Natural killer cell (primary cell): ENCODE measurements at regions of chr1 and their contacts with region 1.

Region 1: DNA sequence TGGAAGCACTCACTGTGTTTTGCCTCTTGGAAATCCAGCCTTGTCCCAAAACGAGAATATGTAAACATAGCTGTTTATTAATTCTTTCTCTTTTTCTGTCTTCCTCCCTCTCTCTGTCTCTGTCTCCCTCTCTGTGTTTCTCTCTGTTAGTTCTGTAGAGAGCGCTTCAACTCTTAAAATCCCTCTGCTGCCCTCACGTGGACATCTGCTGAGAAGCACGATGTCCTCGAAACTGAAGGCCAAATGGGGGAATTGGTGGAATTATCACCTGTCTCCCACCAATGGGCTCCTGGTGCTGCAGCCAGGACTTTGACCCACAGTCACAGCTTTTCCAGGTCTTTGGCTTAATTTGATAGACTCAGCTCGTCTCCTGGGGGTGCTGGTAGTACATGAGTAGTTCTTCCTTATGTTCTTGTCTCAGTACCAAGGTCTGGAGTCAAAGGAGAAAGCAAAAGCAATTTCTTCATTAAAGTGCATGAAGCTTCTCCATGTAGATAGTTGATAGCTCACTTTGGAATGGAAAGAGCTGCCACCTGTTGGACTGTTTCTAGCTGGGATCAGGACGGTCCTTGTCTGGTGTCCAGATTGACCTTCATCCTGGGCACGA is 5.5 kb upstream of the GBP6 start:
- DNase-seq: peak; percentile 76 to 90
- ATAC-seq: peak; percentile 91 to 99 (median 99)
- H3K4me3 ChIP-seq: no peak overlapping the region
- H3K4me3 Mint-ChIP-seq: peak overlapping the region; percentile 0
- H3K27ac ChIP-seq: no peak overlapping the region
- H3K27ac Mint-ChIP-seq: peak overlapping the region; percentile 2 to 60
- H3K4me1 ChIP-seq: peaks cover 5% of the 10 kb centered on the region
- H3K4me1 Mint-ChIP-seq: peaks cover 13 to 17% of the 10 kb centered on the region in 2 donors
- H3K27me3 ChIP-seq: no peaks in the 10 kb centered on the region
- H3K27me3 Mint-ChIP-seq: peaks cover 0 to 10% of the 10 kb centered on the region in 2 donors
- CTCF ChIP-seq: peak; percentile 87

Region 2: GRCh38 chr1:88998716-88999115 is 359.7 kb before region 1 on chr1:
- intact Hi-C with region 1: loop called (anchors 1 kb)
- DNase-seq: peak in 1 of 2 donors; percentile 87
- ATAC-seq: peak; percentile 81 to 90 (median 89)
- H3K4me3 ChIP-seq: no peak overlapping the region
- H3K4me3 Mint-ChIP-seq: no peak overlapping the region
- H3K27ac ChIP-seq: no peak overlapping the region
- H3K27ac Mint-ChIP-seq: no peak overlapping the region
- H3K4me1 ChIP-seq: peaks cover 1% of the 10 kb centered on the region
- H3K4me1 Mint-ChIP-seq: peaks cover 18 to 19% of the 10 kb centered on the region in 2 donors
- H3K27me3 ChIP-seq: no peaks in the 10 kb centered on the region
- H3K27me3 Mint-ChIP-seq: no peaks in the 10 kb centered on the region
- CTCF ChIP-seq: peak; percentile 69

Region 3: DNA sequence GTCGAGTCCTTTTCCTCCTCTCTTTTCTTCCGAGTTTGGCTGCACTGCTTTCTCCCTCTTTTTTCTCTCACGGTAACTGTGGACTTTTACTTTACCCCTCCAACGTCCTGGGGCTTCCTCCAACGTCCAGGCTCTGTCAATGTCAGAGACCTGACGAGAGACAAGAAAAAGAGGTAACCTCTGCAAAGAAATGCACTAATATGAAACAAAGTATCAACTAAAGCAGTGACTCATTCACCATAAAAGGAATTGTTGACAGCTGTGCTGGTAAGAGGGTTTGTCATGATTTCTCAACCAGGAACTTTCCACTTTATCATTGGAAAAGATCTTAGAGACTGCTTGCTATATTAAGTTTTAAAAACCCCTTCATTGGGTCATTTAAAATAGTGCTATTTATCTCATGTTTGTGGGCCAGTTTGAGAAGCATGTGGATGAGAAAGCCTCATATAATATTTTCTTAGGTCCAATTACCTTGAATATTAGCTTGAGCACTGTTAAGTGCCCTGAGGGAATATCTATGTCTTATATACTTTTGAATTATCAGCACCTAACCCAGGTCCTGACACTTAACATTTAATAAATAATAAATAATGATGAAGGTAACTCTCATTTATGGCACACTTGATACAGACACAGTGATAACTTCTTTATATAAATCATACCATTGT is 232.3 kb before region 1 on chr1 and contains the start of gene GBP2:
- intact Hi-C with region 1: loop called (anchors 1 kb)
- DNase-seq: peak; percentile 34 to 69
- ATAC-seq: peak; percentile 77 to 85 (median 84)
- H3K4me3 ChIP-seq: peak within 1 kb of the TSS; percentile 64
- H3K4me3 Mint-ChIP-seq: peak within 1 kb of the TSS; percentile 100
- H3K27ac ChIP-seq: peak within 1 kb of the TSS; percentile 79
- H3K27ac Mint-ChIP-seq: peak within 1 kb of the TSS; percentile 94 to 97
- H3K4me1 ChIP-seq: peaks cover 32% of the 10 kb centered on the region
- H3K4me1 Mint-ChIP-seq: peaks cover 71 to 77% of the 10 kb centered on the region in 2 donors
- H3K27me3 ChIP-seq: no peaks in the 10 kb centered on the region
- H3K27me3 Mint-ChIP-seq: no peaks in the 10 kb centered on the region
- CTCF ChIP-seq: no peak
- total RNA-seq, gene GBP2: 117 to 153 (median 144) TPM

Region 4: GRCh38 chr1:89271341-89272015 is 86.9 kb before region 1 on chr1:
- intact Hi-C with region 1: loop called (anchors 1 kb)
- DNase-seq: no peak
- ATAC-seq: peak in 2 of 3 donors; percentile 36 to 41
- H3K4me3 ChIP-seq: peak overlapping the region; percentile 56
- H3K4me3 Mint-ChIP-seq: peak overlapping the region; percentile 96
- H3K27ac ChIP-seq: peak overlapping the region; percentile 59
- H3K27ac Mint-ChIP-seq: peak overlapping the region; percentile 98
- H3K4me1 ChIP-seq: peaks cover 24% of the 10 kb centered on the region
- H3K4me1 Mint-ChIP-seq: peaks cover 76 to 79% of the 10 kb centered on the region in 2 donors
- H3K27me3 ChIP-seq: no peaks in the 10 kb centered on the region
- H3K27me3 Mint-ChIP-seq: no peaks in the 10 kb centered on the region
- CTCF ChIP-seq: no peak

Region 5: GRCh38 chr1:89310505-89310904 is 47.9 kb before region 1 on chr1:
- intact Hi-C with region 1: loop called (anchors 5 kb)
- DNase-seq: peak in 1 of 2 donors; percentile 47
- ATAC-seq: peak; percentile 80 to 85 (median 84)
- H3K4me3 ChIP-seq: no peak overlapping the region
- H3K4me3 Mint-ChIP-seq: peak overlapping the region; percentile 73
- H3K27ac ChIP-seq: peak overlapping the region; percentile 79
- H3K27ac Mint-ChIP-seq: peak overlapping the region; percentile 91 to 98
- H3K4me1 ChIP-seq: peaks cover 22% of the 10 kb centered on the region
- H3K4me1 Mint-ChIP-seq: peaks cover 40 to 45% of the 10 kb centered on the region in 2 donors
- H3K27me3 ChIP-seq: no peaks in the 10 kb centered on the region
- H3K27me3 Mint-ChIP-seq: no peaks in the 10 kb centered on the region
- CTCF ChIP-seq: no peak

Region 6: GRCh38 chr1:89425056-89425455 is 66.7 kb after region 1 on chr1:
- intact Hi-C with region 1: no loop called
- DNase-seq: no peak
- ATAC-seq: no peak
- H3K4me3 ChIP-seq: no peak overlapping the region
- H3K4me3 Mint-ChIP-seq: no peak overlapping the region
- H3K27ac ChIP-seq: no peak overlapping the region
- H3K27ac Mint-ChIP-seq: no peak overlapping the region
- H3K4me1 ChIP-seq: no peaks in the 10 kb centered on the region
- H3K4me1 Mint-ChIP-seq: no peaks in the 10 kb centered on the region
- H3K27me3 ChIP-seq: no peaks in the 10 kb centered on the region
- H3K27me3 Mint-ChIP-seq: peaks cover 3 to 19% of the 10 kb centered on the region in 2 donors
- CTCF ChIP-seq: no peak